ENCODE measurements at regions of chr11 and their contacts with region 1.

Region 1: DNA sequence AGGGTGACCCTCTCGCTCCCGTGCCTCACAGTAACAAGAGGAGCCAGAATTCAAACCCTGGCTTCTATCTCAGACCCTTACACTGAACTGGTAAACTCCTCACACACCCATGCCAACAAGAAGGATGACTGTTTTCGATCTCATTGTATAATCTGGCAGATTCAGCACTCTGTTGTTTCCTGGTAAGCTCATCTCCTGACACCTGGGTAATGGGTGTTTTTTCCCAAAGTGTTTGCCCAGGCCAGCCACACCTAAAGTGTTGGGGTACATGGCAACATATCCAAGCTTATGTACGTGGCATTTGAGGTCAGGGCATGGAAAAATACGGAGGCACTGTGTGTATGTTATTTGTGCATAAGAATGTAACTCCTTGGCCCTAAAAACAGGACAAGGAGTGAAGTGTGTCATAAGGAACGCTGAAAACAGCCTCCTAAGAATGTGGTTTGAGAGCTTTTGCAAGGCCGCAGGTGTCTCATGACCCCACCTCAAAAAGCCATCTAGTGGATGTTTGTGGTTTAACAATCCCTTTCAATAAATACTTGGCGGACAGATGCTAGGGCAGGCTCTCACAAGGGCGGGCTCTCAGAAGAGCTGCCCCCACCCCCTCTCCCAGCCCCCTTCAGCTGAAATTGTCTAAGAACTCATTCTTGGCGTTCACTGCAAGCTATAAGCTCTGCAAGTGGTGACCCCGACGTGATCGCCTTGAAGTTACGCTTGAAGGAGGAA is at the start of gene MS4A15:
- DNase-seq: peak; percentile 64
- H3K4me3 ChIP-seq: no peak within 1 kb of the TSS
- H3K27ac ChIP-seq: no peak within 1 kb of the TSS
- H3K4me1 ChIP-seq: no peaks in the 10 kb centered on the region
- H3K27me3 ChIP-seq: peaks cover 20% of the 10 kb centered on the region
- CTCF ChIP-seq: peak; percentile 64
- total RNA-seq, gene MS4A15: not detected in 2 replicates

Region 2: GRCh38 chr11:60680455-60681119 is 75.9 kb before region 1 on chr11:
- CTCF ChIA-PET with region 1: no interaction called
- POLR2A ChIA-PET with region 1: no interaction called
- intact Hi-C with region 1: no loop called
- DNase-seq: no peak
- H3K4me3 ChIP-seq: no peak overlapping the region
- H3K27ac ChIP-seq: no peak overlapping the region
- H3K4me1 ChIP-seq: no peaks in the 10 kb centered on the region
- H3K27me3 ChIP-seq: no peaks in the 10 kb centered on the region
- CTCF ChIP-seq: no peak

Region 3: DNA sequence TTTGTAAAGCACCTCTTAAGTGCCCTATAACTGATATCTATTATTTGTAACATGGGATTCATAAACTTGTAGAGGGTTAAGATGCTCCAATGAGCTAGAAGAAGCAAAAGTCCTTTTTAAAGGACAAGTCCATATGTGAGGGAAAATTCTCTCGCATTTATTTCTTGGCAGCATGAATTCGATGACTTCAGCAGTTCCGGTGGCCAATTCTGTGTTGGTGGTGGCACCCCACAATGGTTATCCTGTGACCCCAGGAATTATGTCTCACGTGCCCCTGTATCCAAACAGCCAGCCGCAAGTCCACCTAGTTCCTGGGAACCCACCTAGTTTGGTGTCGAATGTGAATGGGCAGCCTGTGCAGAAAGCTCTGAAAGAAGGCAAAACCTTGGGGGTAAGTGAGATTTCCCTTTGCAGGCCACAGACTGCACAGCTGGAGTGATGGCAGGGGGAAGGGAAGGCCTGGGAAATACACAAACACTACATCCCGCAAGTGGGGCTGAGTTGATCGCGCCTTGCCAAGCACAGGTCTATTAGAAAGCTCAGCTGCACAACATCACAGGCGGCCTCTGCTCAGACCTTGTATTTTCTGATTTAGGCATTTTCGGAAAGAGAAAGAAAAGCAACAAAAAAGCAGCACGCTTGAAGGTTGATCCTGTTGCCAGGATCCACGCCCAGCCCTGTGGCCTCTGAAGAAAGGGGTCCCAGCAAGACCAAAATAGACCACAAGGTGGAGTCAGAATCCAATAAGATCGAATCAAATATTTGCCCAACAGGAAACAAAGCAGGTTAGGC is 55.6 kb before region 1 on chr11:
- CTCF ChIA-PET with region 1: no interaction called
- POLR2A ChIA-PET with region 1: no interaction called
- intact Hi-C with region 1: loop called (anchors 5 kb)
- DNase-seq: peak; percentile 66
- H3K4me3 ChIP-seq: no peak overlapping the region
- H3K27ac ChIP-seq: no peak overlapping the region
- H3K4me1 ChIP-seq: peaks cover 18% of the 10 kb centered on the region
- H3K27me3 ChIP-seq: no peaks in the 10 kb centered on the region
- CTCF ChIP-seq: peak; percentile 74

Measured in A673 (cell line).